B cell (primary cell): ENCODE measurements at regions of chr1 and their contacts with region 1.

Region 1: DNA sequence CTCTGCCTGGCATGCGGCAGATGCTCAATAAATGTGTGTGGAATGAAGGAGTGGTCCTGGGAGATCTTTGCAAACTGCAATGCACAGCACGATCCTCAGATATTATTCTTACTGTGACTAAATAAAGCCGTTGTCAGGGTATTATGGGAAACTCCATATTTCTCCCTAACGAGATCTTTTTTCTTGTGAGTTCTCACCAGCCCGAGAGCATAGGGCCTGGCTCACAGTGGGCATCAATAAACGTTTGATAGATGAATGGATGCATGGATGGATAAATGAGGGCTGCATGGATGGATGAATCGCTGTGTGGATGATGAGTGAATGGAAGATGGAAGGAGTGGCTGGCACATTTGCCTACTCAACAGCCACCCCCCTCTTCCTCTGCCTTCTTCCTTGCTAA is 69.6 kb downstream of the SDC3 start:
- DNase-seq: no peak
- ATAC-seq: no peak
- H3K4me3 ChIP-seq: no peak overlapping the region
- H3K4me3 Mint-ChIP-seq: no peak overlapping the region
- H3K27ac ChIP-seq: no peak overlapping the region
- H3K27ac Mint-ChIP-seq: no peak overlapping the region
- H3K4me1 ChIP-seq: no peaks in the 10 kb centered on the region
- H3K4me1 Mint-ChIP-seq: no peaks in the 10 kb centered on the region
- H3K27me3 ChIP-seq: peaks cover 0 to 23% (median 7%) of the 10 kb centered on the region in 4 experiments
- H3K27me3 Mint-ChIP-seq: peaks cover 54% of the 10 kb centered on the region
- CTCF ChIP-seq: no peak

Region 2: GRCh38 chr1:30823969-30824735 is 14.8 kb before region 1 on chr1:
- CTCF ChIA-PET with region 1: interaction called, 3 read pairs
- POLR2A ChIA-PET with region 1: interaction called, 10 read pairs
- intact Hi-C with region 1: no loop called
- DNase-seq: peak; percentile 82
- ATAC-seq: peak; percentile 96
- H3K4me3 ChIP-seq: peak overlapping the region in 4 of 5 experiments; percentile 13 to 56 (median 31)
- H3K4me3 Mint-ChIP-seq: peak overlapping the region; percentile 89
- H3K27ac ChIP-seq: no peak overlapping the region
- H3K27ac Mint-ChIP-seq: no peak overlapping the region
- H3K4me1 ChIP-seq: peaks cover 15 to 22% of the 10 kb centered on the region in 2 donors
- H3K4me1 Mint-ChIP-seq: peaks cover 22% of the 10 kb centered on the region
- H3K27me3 ChIP-seq: peaks cover 0 to 51% (median 37%) of the 10 kb centered on the region in 4 experiments
- H3K27me3 Mint-ChIP-seq: peaks cover 75% of the 10 kb centered on the region
- CTCF ChIP-seq: no peak